ENCODE measurements at regions of chr7 and their contacts with region 1.

Region 1: GRCh38 chr7:100132697-100133151 is 6.0 kb downstream of the MBLAC1 start:
- DNase-seq: peak; percentile 80
- ATAC-seq: peak; percentile 80
- H3K4me3 ChIP-seq: no peak overlapping the region
- H3K4me3 Mint-ChIP-seq: no peak overlapping the region
- H3K27ac ChIP-seq: no peak overlapping the region
- H3K27ac Mint-ChIP-seq: peak overlapping the region; percentile 0
- H3K4me1 ChIP-seq: peaks cover 12 to 20% of the 10 kb centered on the region in 2 donors
- H3K4me1 Mint-ChIP-seq: peaks cover 15% of the 10 kb centered on the region
- H3K27me3 ChIP-seq: no peaks in the 10 kb centered on the region
- H3K27me3 Mint-ChIP-seq: no peaks in the 10 kb centered on the region
- CTCF ChIP-seq: peak; percentile 90

Region 2: DNA sequence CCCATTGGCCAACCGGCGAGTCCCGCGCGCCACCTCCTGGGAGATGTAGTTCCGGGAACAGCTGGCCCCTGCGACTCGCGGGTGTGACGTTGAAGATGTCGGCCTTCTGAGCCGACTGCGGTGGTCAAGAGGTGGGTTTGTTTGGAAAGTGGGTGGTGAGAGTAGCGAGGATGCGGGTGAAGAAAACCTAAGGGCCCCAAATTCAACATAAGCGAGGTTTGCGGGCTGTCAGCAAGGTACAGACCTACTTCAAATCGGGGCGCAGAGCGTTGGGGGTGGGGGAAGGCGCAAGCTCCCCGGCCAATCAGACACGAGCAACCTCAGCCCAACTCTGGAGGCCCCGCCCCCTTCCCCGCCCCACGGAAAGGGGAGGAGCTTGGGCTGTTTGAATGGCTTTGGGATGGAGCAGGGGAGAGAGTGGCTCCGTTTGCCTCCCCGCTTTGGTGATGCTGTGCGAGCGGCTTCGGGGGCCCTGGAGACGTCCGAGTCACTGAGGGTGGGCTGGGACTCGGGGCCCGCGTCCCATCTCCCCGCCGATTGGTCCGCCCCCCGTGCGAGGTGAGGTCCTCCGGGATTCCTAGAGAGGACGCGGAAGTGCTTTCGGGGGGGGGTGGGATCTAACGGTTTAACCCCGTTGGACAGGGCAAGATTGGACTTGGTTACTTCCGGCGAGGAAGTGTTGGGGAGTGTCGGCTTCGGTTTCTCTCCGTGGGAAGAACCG is 628.0 kb before region 1 on chr7 and contains the start of gene ZKSCAN5:
- CTCF ChIA-PET with region 1: no interaction called
- POLR2A ChIA-PET with region 1: no interaction called
- intact Hi-C with region 1: no loop called
- DNase-seq: peak; percentile 99
- ATAC-seq: peak; percentile 84
- H3K4me3 ChIP-seq: peak within 1 kb of the TSS; percentile 76 to 96 (median 93)
- H3K4me3 Mint-ChIP-seq: peak within 1 kb of the TSS; percentile 96
- H3K27ac ChIP-seq: peak within 1 kb of the TSS; percentile 77 to 80
- H3K27ac Mint-ChIP-seq: peak within 1 kb of the TSS; percentile 98
- H3K4me1 ChIP-seq: peaks cover 20 to 27% of the 10 kb centered on the region in 2 donors
- H3K4me1 Mint-ChIP-seq: peaks cover 31% of the 10 kb centered on the region
- H3K27me3 ChIP-seq: no peaks in the 10 kb centered on the region
- H3K27me3 Mint-ChIP-seq: no peaks in the 10 kb centered on the region
- CTCF ChIP-seq: no peak
- total RNA-seq, gene ZKSCAN5: 10.9 and 11.7 TPM in 2 replicates

Region 3: DNA sequence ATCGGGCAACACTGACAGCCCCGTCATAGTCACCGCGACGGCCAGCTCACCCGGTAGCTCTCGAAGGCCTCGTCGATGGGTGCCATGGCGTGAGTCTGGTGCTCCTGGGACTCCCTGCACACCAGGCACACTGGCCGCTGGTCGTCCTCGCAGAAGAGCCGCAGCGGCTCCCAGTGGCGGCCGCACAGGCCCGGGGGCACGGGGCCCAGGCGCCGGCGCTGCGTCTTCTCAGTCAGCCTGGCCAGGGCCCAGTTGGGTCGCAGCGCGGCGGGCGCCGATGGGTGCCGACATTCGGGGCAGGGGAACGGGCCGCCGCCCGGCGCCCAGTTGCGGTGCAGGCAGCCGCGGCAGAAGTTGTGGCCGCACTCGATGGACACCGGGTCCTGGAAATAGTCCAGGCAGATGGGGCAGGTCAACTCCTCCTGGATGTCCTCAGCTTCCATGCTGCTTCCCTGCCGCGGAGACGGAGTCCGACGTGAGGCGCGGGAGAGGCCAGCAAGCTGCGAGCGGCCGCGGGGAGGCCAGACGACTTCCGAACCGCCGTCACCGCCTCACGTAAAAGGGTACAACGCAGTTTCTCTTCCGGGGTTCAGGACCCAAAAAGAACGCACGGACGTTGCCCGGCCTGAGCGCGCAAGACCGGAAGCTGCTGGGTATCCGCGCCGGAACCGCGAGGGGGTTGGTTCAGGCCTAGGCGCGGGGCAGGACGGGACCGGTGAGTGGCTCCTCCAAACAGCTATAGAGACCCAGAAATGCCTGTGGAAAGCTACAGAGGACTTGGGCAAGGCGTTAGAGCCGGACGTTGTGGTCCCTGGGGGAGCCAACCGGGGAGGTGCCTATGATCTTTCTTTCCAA is 213.5 kb before region 1 on chr7 and contains the start of gene TRIM4:
- CTCF ChIA-PET with region 1: interaction called, 26 read pairs
- POLR2A ChIA-PET with region 1: no interaction called
- intact Hi-C with region 1: no loop called
- DNase-seq: peak; percentile 92
- ATAC-seq: peak; percentile 97
- H3K4me3 ChIP-seq: peak within 1 kb of the TSS; percentile 65 to 89 (median 78)
- H3K4me3 Mint-ChIP-seq: peak within 1 kb of the TSS; percentile 96
- H3K27ac ChIP-seq: peak within 1 kb of the TSS; percentile 81 to 93
- H3K27ac Mint-ChIP-seq: peak within 1 kb of the TSS; percentile 97
- H3K4me1 ChIP-seq: peaks cover 32 to 35% of the 10 kb centered on the region in 2 donors
- H3K4me1 Mint-ChIP-seq: peaks cover 47% of the 10 kb centered on the region
- H3K27me3 ChIP-seq: no peaks in the 10 kb centered on the region
- H3K27me3 Mint-ChIP-seq: peaks cover 6% of the 10 kb centered on the region
- CTCF ChIP-seq: peak; percentile 21
- total RNA-seq, gene TRIM4: 56.7 and 58.1 TPM in 2 replicates

Region 4: GRCh38 chr7:100081535-100082102 is 51.1 kb before region 1 on chr7 and contains the start of gene ZNF3:
- CTCF ChIA-PET with region 1: interaction called, 12 read pairs
- POLR2A ChIA-PET with region 1: interaction called, 4 read pairs
- intact Hi-C with region 1: loop called (anchors 1 kb)
- DNase-seq: peak; percentile 99
- ATAC-seq: peak; percentile 77
- H3K4me3 ChIP-seq: peak within 1 kb of the TSS; percentile 70 to 84 (median 79)
- H3K4me3 Mint-ChIP-seq: peak within 1 kb of the TSS; percentile 86
- H3K27ac ChIP-seq: peak within 1 kb of the TSS; percentile 81 to 91
- H3K27ac Mint-ChIP-seq: peak within 1 kb of the TSS; percentile 91
- H3K4me1 ChIP-seq: peaks cover 16 to 24% of the 10 kb centered on the region in 2 donors
- H3K4me1 Mint-ChIP-seq: peaks cover 32% of the 10 kb centered on the region
- H3K27me3 ChIP-seq: no peaks in the 10 kb centered on the region
- H3K27me3 Mint-ChIP-seq: no peaks in the 10 kb centered on the region
- CTCF ChIP-seq: peak; percentile 96
- total RNA-seq, gene ZNF3: 44.8 and 48.5 TPM in 2 replicates

Region 5: GRCh38 chr7:100167921-100168323 is 35.2 kb after region 1 on chr7:
- CTCF ChIA-PET with region 1: interaction called, 12 read pairs
- POLR2A ChIA-PET with region 1: no interaction called
- intact Hi-C with region 1: no loop called
- DNase-seq: peak; percentile 46
- ATAC-seq: no peak
- H3K4me3 ChIP-seq: peak overlapping the region in 1 of 5 experiments; percentile 35
- H3K4me3 Mint-ChIP-seq: peak overlapping the region; percentile 76
- H3K27ac ChIP-seq: no peak overlapping the region
- H3K27ac Mint-ChIP-seq: no peak overlapping the region
- H3K4me1 ChIP-seq: peaks cover 39 to 47% of the 10 kb centered on the region in 2 donors
- H3K4me1 Mint-ChIP-seq: peaks cover 42% of the 10 kb centered on the region
- H3K27me3 ChIP-seq: peaks cover 0 to 58% (median 37%) of the 10 kb centered on the region in 4 experiments
- H3K27me3 Mint-ChIP-seq: peaks cover 52% of the 10 kb centered on the region
- CTCF ChIP-seq: no peak

Region 6: GRCh38 chr7:100200693-100201092 is 68.0 kb after region 1 on chr7:
- CTCF ChIA-PET with region 1: interaction called, 13 read pairs
- POLR2A ChIA-PET with region 1: interaction called, 4 read pairs
- intact Hi-C with region 1: no loop called
- DNase-seq: no peak
- ATAC-seq: no peak
- H3K4me3 ChIP-seq: no peak overlapping the region
- H3K4me3 Mint-ChIP-seq: peak overlapping the region; percentile 83
- H3K27ac ChIP-seq: peak overlapping the region in 1 of 2 donors; percentile 56
- H3K27ac Mint-ChIP-seq: peak overlapping the region; percentile 89
- H3K4me1 ChIP-seq: peaks cover 23 to 35% of the 10 kb centered on the region in 2 donors
- H3K4me1 Mint-ChIP-seq: peaks cover 60% of the 10 kb centered on the region
- H3K27me3 ChIP-seq: no peaks in the 10 kb centered on the region
- H3K27me3 Mint-ChIP-seq: no peaks in the 10 kb centered on the region
- CTCF ChIP-seq: no peak

Region 7: GRCh38 chr7:100342765-100343164 is 210.0 kb after region 1 on chr7:
- CTCF ChIA-PET with region 1: interaction called, 66 read pairs
- POLR2A ChIA-PET with region 1: interaction called, 3 read pairs
- intact Hi-C with region 1: loop called (anchors 1 kb)
- DNase-seq: peak; percentile 9
- ATAC-seq: no peak
- H3K4me3 ChIP-seq: no peak overlapping the region
- H3K4me3 Mint-ChIP-seq: peak overlapping the region; percentile 41
- H3K27ac ChIP-seq: peak overlapping the region in 1 of 2 donors; percentile 63
- H3K27ac Mint-ChIP-seq: peak overlapping the region; percentile 87
- H3K4me1 ChIP-seq: peaks cover 18 to 29% of the 10 kb centered on the region in 2 donors
- H3K4me1 Mint-ChIP-seq: peaks cover 45% of the 10 kb centered on the region
- H3K27me3 ChIP-seq: no peaks in the 10 kb centered on the region
- H3K27me3 Mint-ChIP-seq: no peaks in the 10 kb centered on the region
- CTCF ChIP-seq: no peak

Region 8: DNA sequence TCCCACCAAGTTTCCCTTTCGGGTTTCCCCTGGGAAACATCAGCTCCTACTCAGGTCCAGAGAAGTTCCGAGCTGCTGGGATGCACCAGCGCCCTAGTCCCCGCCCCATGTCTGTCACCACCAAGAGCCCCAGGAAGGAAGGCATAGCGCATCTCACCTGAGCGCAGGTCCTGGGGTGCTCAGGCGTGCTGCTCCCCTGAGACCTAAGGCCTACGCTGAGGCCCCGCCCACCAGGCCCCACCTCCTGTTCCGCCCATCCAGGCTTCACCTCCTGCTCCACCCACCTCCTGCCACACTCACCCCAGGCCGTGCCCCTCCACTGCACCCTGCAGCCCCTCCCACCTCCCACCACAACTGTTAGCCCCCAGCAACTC is 509.8 kb after region 1 on chr7:
- CTCF ChIA-PET with region 1: no interaction called
- POLR2A ChIA-PET with region 1: no interaction called
- intact Hi-C with region 1: no loop called
- DNase-seq: peak; percentile 82
- ATAC-seq: peak; percentile 94
- H3K4me3 ChIP-seq: peak overlapping the region in 1 of 5 experiments; percentile 29
- H3K4me3 Mint-ChIP-seq: no peak overlapping the region
- H3K27ac ChIP-seq: no peak overlapping the region
- H3K27ac Mint-ChIP-seq: no peak overlapping the region
- H3K4me1 ChIP-seq: peaks cover 4 to 10% of the 10 kb centered on the region in 2 donors
- H3K4me1 Mint-ChIP-seq: peaks cover 8% of the 10 kb centered on the region
- H3K27me3 ChIP-seq: peaks cover 0 to 19% (median 2%) of the 10 kb centered on the region in 4 experiments
- H3K27me3 Mint-ChIP-seq: peaks cover 11% of the 10 kb centered on the region
- CTCF ChIP-seq: no peak

Region 9: DNA sequence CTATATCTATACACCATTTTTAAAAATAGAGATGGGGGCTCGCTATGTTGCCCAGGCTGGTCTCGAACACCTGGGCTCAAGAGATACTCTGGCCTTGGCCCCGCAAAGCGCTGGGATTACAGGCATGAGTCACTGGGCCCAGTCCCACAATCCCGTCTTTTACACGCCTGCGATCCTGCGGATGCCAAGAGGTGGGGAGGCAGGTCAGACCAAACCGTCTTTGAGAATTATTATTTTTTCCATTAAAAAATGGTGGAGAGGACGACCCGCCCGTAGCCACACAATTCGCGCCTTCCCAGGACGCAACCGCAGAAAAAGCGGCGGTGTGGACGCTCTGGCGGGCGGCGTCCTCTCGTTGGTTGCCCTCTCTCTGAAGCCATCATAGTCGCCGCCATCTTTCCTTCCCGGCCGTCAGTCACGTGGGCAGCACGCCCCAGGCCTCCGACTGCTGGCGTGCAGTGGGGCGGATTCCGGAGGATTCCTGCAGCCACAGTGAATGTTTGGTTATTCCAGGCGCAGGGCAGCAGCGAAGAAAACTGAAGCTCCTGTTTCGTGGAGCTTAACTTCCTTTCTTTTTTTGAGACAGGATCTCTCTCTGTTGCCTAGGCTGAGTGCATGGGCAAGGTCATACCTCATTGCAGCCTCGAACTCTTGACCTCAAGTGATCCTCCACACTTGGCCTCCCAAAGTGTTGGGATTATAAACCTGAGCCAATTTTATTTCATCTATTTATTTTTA is 704.5 kb after region 1 on chr7:
- CTCF ChIA-PET with region 1: no interaction called
- POLR2A ChIA-PET with region 1: no interaction called
- intact Hi-C with region 1: no loop called
- DNase-seq: peak; percentile 84
- ATAC-seq: peak; percentile 98
- H3K4me3 ChIP-seq: peak overlapping the region; percentile 30 to 75 (median 61)
- H3K4me3 Mint-ChIP-seq: peak overlapping the region; percentile 88
- H3K27ac ChIP-seq: peak overlapping the region; percentile 25 to 41
- H3K27ac Mint-ChIP-seq: peak overlapping the region; percentile 86
- H3K4me1 ChIP-seq: peaks cover 3 to 17% of the 10 kb centered on the region in 2 donors
- H3K4me1 Mint-ChIP-seq: peaks cover 14% of the 10 kb centered on the region
- H3K27me3 ChIP-seq: no peaks in the 10 kb centered on the region
- H3K27me3 Mint-ChIP-seq: no peaks in the 10 kb centered on the region
- CTCF ChIP-seq: no peak

Measured in B cell (primary cell).